Activated naive CD4-positive, alpha-beta T cell treated with anti-CD3 and anti-CD28 coated beads for 36 hours (primary cell): ENCODE measurements at regions of chr9 and their contacts with region 1.

Region 1: DNA sequence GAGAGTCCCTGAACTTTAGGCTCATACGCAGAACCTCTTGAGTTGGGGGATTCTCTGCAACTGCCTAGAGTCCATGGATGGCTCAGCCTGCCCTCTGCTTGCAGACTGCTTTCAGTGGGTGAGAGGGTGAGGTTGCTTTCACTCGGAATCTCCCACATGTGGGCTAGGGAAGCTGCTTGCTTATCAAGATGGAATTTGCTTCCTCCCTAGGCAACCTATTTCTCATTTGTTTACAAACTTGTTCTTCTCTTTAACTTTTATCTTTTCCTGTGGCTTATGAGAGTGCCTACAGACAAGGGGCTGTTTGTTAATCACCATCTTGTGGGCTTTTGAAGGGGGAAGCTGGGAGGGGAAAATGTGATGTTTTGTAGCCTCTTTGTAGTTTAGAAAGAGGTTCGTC is 10.0 kb downstream of the TLE4 start:
- DNase-seq: peak; percentile 52
- H3K4me3 Mint-ChIP-seq: peak overlapping the region; percentile 62
- H3K27ac Mint-ChIP-seq: peak overlapping the region; percentile 11
- H3K4me1 Mint-ChIP-seq: peaks cover 72% of the 10 kb centered on the region
- H3K27me3 Mint-ChIP-seq: no peaks in the 10 kb centered on the region

Region 2: DNA sequence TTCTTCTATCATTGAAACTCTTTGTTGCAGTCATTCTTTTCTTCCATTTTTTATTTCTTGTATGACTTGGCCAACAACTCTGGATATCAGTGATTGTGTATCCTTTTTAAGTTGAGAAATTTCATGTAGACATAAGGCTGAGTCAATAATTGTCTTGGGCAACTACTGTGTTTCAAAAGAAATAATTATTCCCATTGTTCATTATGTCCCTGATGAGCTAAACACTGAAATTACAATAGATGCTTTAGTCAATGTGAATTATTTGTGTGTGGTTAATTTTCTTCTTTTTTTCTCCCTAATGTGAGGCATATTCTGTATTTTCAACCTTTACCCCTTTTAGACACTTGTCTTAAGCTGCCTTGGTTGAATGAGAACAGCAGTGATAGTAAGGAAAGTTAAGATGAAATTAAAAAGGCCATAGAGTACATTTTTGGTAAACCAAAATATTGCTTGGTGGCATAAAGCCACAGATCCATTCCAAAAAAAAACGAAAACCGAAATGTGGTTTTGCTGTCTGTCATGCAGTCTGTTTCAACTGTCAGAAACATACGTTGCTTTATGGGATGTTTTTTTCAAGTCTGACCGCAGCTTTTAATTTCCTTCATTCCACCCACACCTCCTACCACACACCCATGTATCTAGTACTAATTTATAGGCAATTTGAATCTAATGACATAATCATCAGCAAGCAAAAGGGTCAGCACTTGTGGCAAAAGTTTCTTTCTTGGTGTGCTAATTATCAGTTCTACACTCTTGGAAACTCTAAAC is 11.1 kb after region 1 on chr9:
- CTCF ChIA-PET with region 1: interaction called, 3 read pairs
- intact Hi-C with region 1: loop called (anchors 1 kb)
- DNase-seq: peak; percentile 35
- H3K4me3 Mint-ChIP-seq: no peak overlapping the region
- H3K27ac Mint-ChIP-seq: no peak overlapping the region
- H3K4me1 Mint-ChIP-seq: peaks cover 58% of the 10 kb centered on the region
- H3K27me3 Mint-ChIP-seq: no peaks in the 10 kb centered on the region

Region 3: GRCh38 chr9:79623799-79624721 is 42.3 kb after region 1 on chr9:
- CTCF ChIA-PET with region 1: no interaction called
- intact Hi-C with region 1: loop called (anchors 1 kb)
- DNase-seq: peak; percentile 59
- H3K4me3 Mint-ChIP-seq: peak overlapping the region; percentile 42
- H3K27ac Mint-ChIP-seq: peak overlapping the region; percentile 81
- H3K4me1 Mint-ChIP-seq: peaks cover 37% of the 10 kb centered on the region
- H3K27me3 Mint-ChIP-seq: no peaks in the 10 kb centered on the region